Naive thymus-derived CD4-positive, alpha-beta T cell (primary cell): ENCODE measurements at regions of chr6 and their contacts with region 1.

Region 1: GRCh38 chr6:29752451-29753308 is 29.4 kb downstream of the HLA-F start:
- DNase-seq: peak; percentile 69 to 86 (median 77)
- ATAC-seq: peak; percentile 87
- H3K4me3 ChIP-seq: peak overlapping the region; percentile 99
- H3K4me3 Mint-ChIP-seq: peak overlapping the region; percentile 85 to 97 (median 93)
- H3K27ac ChIP-seq: peak overlapping the region; percentile 69
- H3K27ac Mint-ChIP-seq: peak overlapping the region; percentile 16 to 96 (median 88)
- H3K4me1 ChIP-seq: peaks cover 10 to 16% of the 10 kb centered on the region in 2 donors
- H3K4me1 Mint-ChIP-seq: peaks cover 24 to 54% (median 48%) of the 10 kb centered on the region in 7 donors
- H3K27me3 ChIP-seq: no peaks in the 10 kb centered on the region
- H3K27me3 Mint-ChIP-seq: peaks cover 0 to 18% (median 0%) of the 10 kb centered on the region in 5 donors

Region 2: GRCh38 chr6:29705389-29706231 is 47.1 kb before region 1 on chr6:
- CTCF ChIA-PET with region 1: interaction called, 25 read pairs
- POLR2A ChIA-PET with region 1: interaction called, 17 read pairs
- intact Hi-C with region 1: loop called (anchors 1 kb)
- DNase-seq: peak in 4 of 9 donors; percentile 41 to 60 (median 43)
- ATAC-seq: no peak
- H3K4me3 ChIP-seq: no peak overlapping the region
- H3K4me3 Mint-ChIP-seq: peak overlapping the region in 6 of 10 donors; percentile 20 to 77 (median 42)
- H3K27ac ChIP-seq: peak overlapping the region; percentile 2
- H3K27ac Mint-ChIP-seq: peak overlapping the region in 8 of 9 donors; percentile 16 to 95 (median 82)
- H3K4me1 ChIP-seq: peaks cover 47 to 54% of the 10 kb centered on the region in 2 donors
- H3K4me1 Mint-ChIP-seq: peaks cover 21 to 59% (median 51%) of the 10 kb centered on the region in 7 donors
- H3K27me3 ChIP-seq: no peaks in the 10 kb centered on the region
- H3K27me3 Mint-ChIP-seq: peaks cover 4 to 37% (median 8%) of the 10 kb centered on the region in 5 donors

Region 3: GRCh38 chr6:29737707-29738630 is 14.7 kb before region 1 on chr6:
- CTCF ChIA-PET with region 1: interaction called, 107 read pairs
- POLR2A ChIA-PET with region 1: interaction called, 32 read pairs
- intact Hi-C with region 1: loop called (anchors 1 kb)
- DNase-seq: peak; percentile 41 to 74 (median 65)
- ATAC-seq: peak; percentile 94
- H3K4me3 ChIP-seq: no peak overlapping the region
- H3K4me3 Mint-ChIP-seq: no peak overlapping the region
- H3K27ac ChIP-seq: no peak overlapping the region
- H3K27ac Mint-ChIP-seq: peak overlapping the region in 1 of 9 donors; percentile 48
- H3K4me1 ChIP-seq: no peaks in the 10 kb centered on the region
- H3K4me1 Mint-ChIP-seq: peaks cover 11 to 29% (median 15%) of the 10 kb centered on the region in 7 donors
- H3K27me3 ChIP-seq: no peaks in the 10 kb centered on the region
- H3K27me3 Mint-ChIP-seq: no peaks in the 10 kb centered on the region

Region 4: GRCh38 chr6:29834564-29835436 is 82.1 kb after region 1 on chr6:
- CTCF ChIA-PET with region 1: interaction called, 7 read pairs
- POLR2A ChIA-PET with region 1: no interaction called
- intact Hi-C with region 1: loop called in 1 of 2 experiments (anchors 5 kb)
- DNase-seq: peak in 8 of 9 donors; percentile 34 to 60 (median 47)
- ATAC-seq: peak; percentile 77
- H3K4me3 ChIP-seq: no peak overlapping the region
- H3K4me3 Mint-ChIP-seq: no peak overlapping the region
- H3K27ac ChIP-seq: no peak overlapping the region
- H3K27ac Mint-ChIP-seq: no peak overlapping the region
- H3K4me1 ChIP-seq: no peaks in the 10 kb centered on the region
- H3K4me1 Mint-ChIP-seq: peaks cover 0 to 11% (median 0%) of the 10 kb centered on the region in 7 donors
- H3K27me3 ChIP-seq: no peaks in the 10 kb centered on the region
- H3K27me3 Mint-ChIP-seq: peaks cover 46 to 79% (median 67%) of the 10 kb centered on the region in 5 donors

Region 5: DNA sequence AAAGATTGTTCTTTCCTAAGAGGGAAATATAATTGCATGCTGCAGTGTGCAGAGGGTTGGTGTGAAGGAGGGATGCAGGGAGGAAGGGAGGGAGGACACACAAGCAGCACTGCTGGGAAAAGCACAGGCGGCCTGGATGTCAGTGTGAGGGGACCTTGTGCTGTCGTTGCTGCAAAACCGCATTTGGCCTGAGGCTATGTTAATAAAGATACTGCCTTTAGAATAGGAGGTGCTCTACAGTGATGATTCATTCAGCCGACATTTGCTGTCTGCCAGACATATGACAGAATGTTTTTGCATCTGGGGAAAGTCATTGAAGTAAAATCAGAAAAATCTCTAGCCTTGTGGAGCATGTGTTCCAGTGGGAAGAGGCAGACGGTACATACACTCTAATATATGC is 511.1 kb after region 1 on chr6:
- CTCF ChIA-PET with region 1: no interaction called
- POLR2A ChIA-PET with region 1: no interaction called
- intact Hi-C with region 1: no loop called
- DNase-seq: no peak
- ATAC-seq: no peak
- H3K4me3 ChIP-seq: no peak overlapping the region
- H3K4me3 Mint-ChIP-seq: peak overlapping the region in 1 of 10 donors; percentile 39
- H3K27ac ChIP-seq: no peak overlapping the region
- H3K27ac Mint-ChIP-seq: no peak overlapping the region
- H3K4me1 ChIP-seq: peaks cover 5 to 6% of the 10 kb centered on the region in 2 donors
- H3K4me1 Mint-ChIP-seq: peaks cover 4 to 8% (median 7%) of the 10 kb centered on the region in 7 donors
- H3K27me3 ChIP-seq: no peaks in the 10 kb centered on the region
- H3K27me3 Mint-ChIP-seq: peaks cover 0 to 9% (median 0%) of the 10 kb centered on the region in 5 donors